ENCODE measurements at regions of chr20 and their contacts with region 1.

Region 1: GRCh38 chr20:33589059-33589458 is 73.1 kb upstream of the C20orf144 start:
- DNase-seq: no peak
- H3K4me3 ChIP-seq: no peak overlapping the region
- H3K27ac ChIP-seq: no peak overlapping the region
- H3K4me1 ChIP-seq: peaks cover 30% of the 10 kb centered on the region
- CTCF ChIP-seq: no peak

Region 2: GRCh38 chr20:33576432-33577125 is 12.5 kb before region 1 on chr20:
- CTCF ChIA-PET with region 1: no interaction called
- POLR2A ChIA-PET with region 1: interaction called, 29 read pairs
- intact Hi-C with region 1: no loop called
- DNase-seq: peak; percentile 81
- H3K4me3 ChIP-seq: peak overlapping the region; percentile 36
- H3K27ac ChIP-seq: peak overlapping the region; percentile 99
- H3K4me1 ChIP-seq: peaks cover 88% of the 10 kb centered on the region
- CTCF ChIP-seq: peak; percentile 77

Region 3: GRCh38 chr20:33606118-33606771 is 17.2 kb after region 1 on chr20:
- CTCF ChIA-PET with region 1: interaction called, 3 read pairs
- POLR2A ChIA-PET with region 1: interaction called, 16 read pairs
- intact Hi-C with region 1: no loop called
- DNase-seq: peak; percentile 66
- H3K4me3 ChIP-seq: peak overlapping the region; percentile 41
- H3K27ac ChIP-seq: peak overlapping the region; percentile 69
- H3K4me1 ChIP-seq: peaks cover 97% of the 10 kb centered on the region
- CTCF ChIP-seq: no peak